ENCODE measurements at regions of chr3 and their contacts with region 1.

Region 1: GRCh38 chr3:31531992-31532586 is 636 bp upstream of the STT3B start:
- DNase-seq: peak; percentile 99
- ATAC-seq: peak; percentile 87
- H3K4me3 Mint-ChIP-seq: no peak overlapping the region
- H3K27ac Mint-ChIP-seq: peak overlapping the region; percentile 99
- H3K4me1 Mint-ChIP-seq: peaks cover 16% of the 10 kb centered on the region
- H3K27me3 Mint-ChIP-seq: no peaks in the 10 kb centered on the region

Region 2: GRCh38 chr3:31219131-31219843 is 312.8 kb before region 1 on chr3:
- CTCF ChIA-PET with region 1: no interaction called
- POLR2A ChIA-PET with region 1: interaction called, 49 read pairs
- DNase-seq: no peak
- ATAC-seq: no peak
- H3K4me3 Mint-ChIP-seq: no peak overlapping the region
- H3K27ac Mint-ChIP-seq: peak overlapping the region; percentile 44
- H3K4me1 Mint-ChIP-seq: peaks cover 86% of the 10 kb centered on the region
- H3K27me3 Mint-ChIP-seq: no peaks in the 10 kb centered on the region

Region 3: DNA sequence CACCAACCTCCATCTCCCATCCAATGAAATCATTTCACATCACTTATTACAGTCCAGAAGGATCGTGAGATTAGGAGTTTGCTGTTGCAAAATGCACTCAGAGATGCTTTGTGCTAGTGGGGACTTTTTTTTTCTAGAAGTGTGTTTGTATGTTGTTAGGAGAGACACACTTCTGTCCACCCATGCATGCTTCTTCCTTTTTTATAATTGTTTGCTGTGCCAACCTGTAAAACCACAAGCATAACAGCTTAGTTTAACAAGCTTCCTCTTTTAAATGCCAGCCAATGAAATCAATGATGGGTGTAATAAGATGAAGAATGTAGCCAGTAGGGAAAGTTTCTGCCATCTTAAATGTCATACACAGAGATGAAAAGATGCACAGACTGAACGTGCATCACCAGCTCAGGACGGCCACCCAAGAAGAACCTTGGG is 304.9 kb before region 1 on chr3:
- CTCF ChIA-PET with region 1: interaction called, 4 read pairs
- POLR2A ChIA-PET with region 1: interaction called, 49 read pairs
- DNase-seq: no peak
- ATAC-seq: peak; percentile 54
- H3K4me3 Mint-ChIP-seq: peak overlapping the region; percentile 12
- H3K27ac Mint-ChIP-seq: peak overlapping the region; percentile 85
- H3K4me1 Mint-ChIP-seq: peaks cover 82% of the 10 kb centered on the region
- H3K27me3 Mint-ChIP-seq: no peaks in the 10 kb centered on the region

Region 4: GRCh38 chr3:31462050-31462569 is 70.0 kb before region 1 on chr3:
- CTCF ChIA-PET with region 1: interaction called, 4 read pairs
- POLR2A ChIA-PET with region 1: interaction called, 13 read pairs
- DNase-seq: peak; percentile 42
- ATAC-seq: peak; percentile 76
- H3K4me3 Mint-ChIP-seq: no peak overlapping the region
- H3K27ac Mint-ChIP-seq: peak overlapping the region; percentile 60
- H3K4me1 Mint-ChIP-seq: peaks cover 14% of the 10 kb centered on the region
- H3K27me3 Mint-ChIP-seq: no peaks in the 10 kb centered on the region

Region 5: GRCh38 chr3:31485196-31485595 is 46.9 kb before region 1 on chr3:
- CTCF ChIA-PET with region 1: no interaction called
- POLR2A ChIA-PET with region 1: no interaction called
- DNase-seq: no peak
- ATAC-seq: no peak
- H3K4me3 Mint-ChIP-seq: no peak overlapping the region
- H3K27ac Mint-ChIP-seq: no peak overlapping the region
- H3K4me1 Mint-ChIP-seq: no peaks in the 10 kb centered on the region
- H3K27me3 Mint-ChIP-seq: no peaks in the 10 kb centered on the region

Region 6: GRCh38 chr3:31509147-31509728 is 22.9 kb before region 1 on chr3:
- CTCF ChIA-PET with region 1: no interaction called
- POLR2A ChIA-PET with region 1: interaction called, 15 read pairs
- DNase-seq: no peak
- ATAC-seq: peak; percentile 18
- H3K4me3 Mint-ChIP-seq: peak overlapping the region; percentile 51
- H3K27ac Mint-ChIP-seq: peak overlapping the region; percentile 83
- H3K4me1 Mint-ChIP-seq: peaks cover 58% of the 10 kb centered on the region
- H3K27me3 Mint-ChIP-seq: no peaks in the 10 kb centered on the region

Region 7: DNA sequence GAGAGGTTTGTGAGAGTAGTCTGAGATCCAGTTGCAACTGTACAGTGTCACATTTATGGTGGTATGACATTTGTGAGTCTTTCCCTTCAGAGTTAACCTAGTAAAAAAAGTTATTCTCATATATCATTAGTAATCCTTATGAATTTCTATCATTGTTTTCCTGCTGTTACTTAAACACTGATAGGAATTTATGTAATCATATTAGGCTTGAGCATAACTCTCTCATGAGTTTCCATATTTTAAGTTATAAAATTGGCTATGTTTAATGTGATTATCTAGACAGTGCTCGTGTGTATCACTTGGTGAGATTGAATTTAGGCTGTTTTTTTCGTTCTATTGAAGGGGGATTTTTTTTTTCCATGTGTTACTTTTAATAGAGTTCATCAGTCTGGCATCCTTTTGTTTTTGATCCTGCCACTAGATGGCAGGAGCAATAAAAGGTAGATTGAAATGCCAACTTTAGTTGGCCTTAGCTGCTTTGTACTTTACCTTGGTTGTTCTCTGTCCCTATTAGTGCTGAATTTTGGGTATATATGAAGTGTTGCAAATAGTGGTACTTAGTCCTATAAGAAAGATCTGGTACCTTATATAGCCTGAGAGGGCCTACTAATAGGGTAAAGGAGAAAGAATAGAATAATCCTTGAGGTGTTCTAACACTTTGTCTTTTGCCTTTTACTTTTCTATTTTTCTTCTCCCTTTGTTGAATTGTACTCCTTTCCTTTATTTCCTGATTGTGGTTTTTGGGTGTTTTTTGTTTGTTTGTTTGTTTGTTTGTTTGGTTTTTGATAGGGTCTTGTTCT is 18.6 kb after region 1 on chr3:
- CTCF ChIA-PET with region 1: interaction called, 15 read pairs
- POLR2A ChIA-PET with region 1: interaction called, 8 read pairs
- DNase-seq: no peak
- ATAC-seq: peak; percentile 33
- H3K4me3 Mint-ChIP-seq: no peak overlapping the region
- H3K27ac Mint-ChIP-seq: no peak overlapping the region
- H3K4me1 Mint-ChIP-seq: peaks cover 59% of the 10 kb centered on the region
- H3K27me3 Mint-ChIP-seq: no peaks in the 10 kb centered on the region

Region 8: GRCh38 chr3:31622636-31623288 is 90.7 kb after region 1 on chr3:
- CTCF ChIA-PET with region 1: no interaction called
- POLR2A ChIA-PET with region 1: no interaction called
- DNase-seq: no peak
- ATAC-seq: no peak
- H3K4me3 Mint-ChIP-seq: no peak overlapping the region
- H3K27ac Mint-ChIP-seq: no peak overlapping the region
- H3K4me1 Mint-ChIP-seq: peaks cover 9% of the 10 kb centered on the region
- H3K27me3 Mint-ChIP-seq: no peaks in the 10 kb centered on the region

Region 9: GRCh38 chr3:31635545-31635944 is 103.5 kb after region 1 on chr3:
- CTCF ChIA-PET with region 1: interaction called, 7 read pairs
- POLR2A ChIA-PET with region 1: interaction called, 14 read pairs
- DNase-seq: no peak
- ATAC-seq: peak; percentile 60
- H3K4me3 Mint-ChIP-seq: no peak overlapping the region
- H3K27ac Mint-ChIP-seq: peak overlapping the region; percentile 66
- H3K4me1 Mint-ChIP-seq: peaks cover 38% of the 10 kb centered on the region
- H3K27me3 Mint-ChIP-seq: no peaks in the 10 kb centered on the region